ENCODE measurements at regions of chr1 and their contacts with region 1.

Region 1: DNA sequence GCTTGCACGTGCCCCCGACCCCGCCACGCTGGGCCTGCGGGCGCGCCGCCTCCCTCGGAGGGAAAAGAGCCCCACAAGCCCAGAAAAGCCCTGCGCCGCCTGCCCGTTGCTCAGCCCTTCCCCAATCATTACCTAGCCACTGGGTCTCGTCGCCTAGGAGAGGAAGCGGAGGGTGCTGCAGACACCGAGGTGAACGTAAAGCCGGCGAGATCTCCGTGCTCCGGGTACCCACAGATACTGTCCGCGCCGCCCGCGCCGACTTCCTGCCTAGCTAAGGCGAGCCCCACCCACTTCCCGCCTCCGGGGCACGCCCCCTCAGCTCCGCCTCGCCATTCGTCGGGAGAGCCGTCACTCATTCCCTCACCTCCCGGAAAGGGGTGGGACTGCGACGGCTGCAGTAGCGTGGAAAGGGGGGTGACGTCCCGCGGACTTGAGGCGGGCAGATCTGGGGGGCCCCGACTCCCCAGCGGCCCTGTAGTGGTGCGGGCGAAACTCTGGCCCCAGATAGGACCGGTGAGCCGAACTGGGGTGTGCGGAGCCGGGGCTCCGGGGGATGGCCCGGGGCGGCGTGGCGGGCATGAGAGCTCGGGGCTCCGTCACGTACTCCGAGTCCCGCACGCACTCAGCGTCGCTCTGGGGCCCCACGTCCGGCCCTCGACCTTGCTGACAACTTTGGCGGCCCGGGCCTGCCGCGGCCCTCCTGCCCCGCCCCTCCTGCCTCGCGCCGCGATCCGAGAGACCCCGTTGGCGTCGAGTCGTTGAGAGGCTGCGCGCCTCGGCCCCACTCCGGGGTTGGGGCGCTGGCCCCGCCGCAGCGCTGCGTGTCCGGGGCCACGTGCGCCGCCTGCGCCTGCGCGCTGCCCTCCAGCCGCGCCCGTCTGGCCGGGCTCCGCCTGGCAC is at the start of gene ENO1:
- DNase-seq: peak; percentile 96 to 100 (median 99)
- ATAC-seq: peak; percentile 78 to 86
- H3K4me3 Mint-ChIP-seq: peak within 1 kb of the TSS; percentile 89 to 97 (median 94)
- H3K27ac Mint-ChIP-seq: peak within 1 kb of the TSS; percentile 87 to 98 (median 96)
- H3K4me1 Mint-ChIP-seq: peaks cover 12 to 50% (median 46%) of the 10 kb centered on the region in 4 donors
- H3K27me3 Mint-ChIP-seq: no peaks in the 10 kb centered on the region
- polyA plus RNA-seq, gene ENO1: 873 to 1,190 (median 1,047) TPM

Region 2: GRCh38 chr1:8764293-8764937 is 114.3 kb before region 1 on chr1:
- POLR2A ChIA-PET with region 1: no interaction called
- DNase-seq: no peak
- ATAC-seq: no peak
- H3K4me3 Mint-ChIP-seq: no peak overlapping the region
- H3K27ac Mint-ChIP-seq: no peak overlapping the region
- H3K4me1 Mint-ChIP-seq: peaks cover 9 to 26% (median 16%) of the 10 kb centered on the region in 4 donors
- H3K27me3 Mint-ChIP-seq: no peaks in the 10 kb centered on the region

Region 3: DNA sequence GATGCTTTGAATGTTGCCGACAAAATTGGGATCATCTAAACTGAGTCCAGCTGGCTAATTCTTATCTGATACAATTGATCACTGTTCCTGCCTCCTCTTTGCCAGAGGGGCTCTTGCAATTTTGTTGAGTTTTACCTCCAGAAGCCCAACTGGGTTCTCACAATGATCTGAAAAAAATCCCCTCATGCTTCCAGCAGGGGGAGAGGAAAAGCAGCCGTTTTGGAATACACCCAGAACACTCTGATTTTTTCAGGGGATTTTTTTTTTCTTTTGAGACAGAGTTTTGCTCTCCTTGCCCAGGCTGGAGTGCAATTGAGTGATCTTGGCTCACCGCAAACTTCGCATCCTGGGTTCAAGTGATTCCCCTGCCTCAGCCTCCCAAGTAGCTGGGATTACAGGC is 47.4 kb before region 1 on chr1:
- POLR2A ChIA-PET with region 1: no interaction called
- DNase-seq: no peak
- ATAC-seq: no peak
- H3K4me3 Mint-ChIP-seq: peak overlapping the region in 1 of 10 donors; percentile 76
- H3K27ac Mint-ChIP-seq: peak overlapping the region in 1 of 10 donors; percentile 83
- H3K4me1 Mint-ChIP-seq: peaks cover 7 to 17% (median 12%) of the 10 kb centered on the region in 4 donors
- H3K27me3 Mint-ChIP-seq: no peaks in the 10 kb centered on the region

Region 4: GRCh38 chr1:8858888-8859706 is 19.6 kb before region 1 on chr1:
- POLR2A ChIA-PET with region 1: interaction called, 18 read pairs
- DNase-seq: peak; percentile 20 to 74 (median 52)
- ATAC-seq: peak; percentile 85
- H3K4me3 Mint-ChIP-seq: peak overlapping the region in 1 of 10 donors; percentile 11
- H3K27ac Mint-ChIP-seq: peak overlapping the region; percentile 21 to 90 (median 80)
- H3K4me1 Mint-ChIP-seq: peaks cover 6 to 17% (median 15%) of the 10 kb centered on the region in 4 donors
- H3K27me3 Mint-ChIP-seq: no peaks in the 10 kb centered on the region

Region 5: GRCh38 chr1:8925406-8925805 is 46.7 kb after region 1 on chr1:
- POLR2A ChIA-PET with region 1: interaction called, 26 read pairs
- DNase-seq: no peak
- ATAC-seq: no peak
- H3K4me3 Mint-ChIP-seq: no peak overlapping the region
- H3K27ac Mint-ChIP-seq: no peak overlapping the region
- H3K4me1 Mint-ChIP-seq: peaks cover 16 to 44% (median 28%) of the 10 kb centered on the region in 4 donors
- H3K27me3 Mint-ChIP-seq: no peaks in the 10 kb centered on the region

Region 6: GRCh38 chr1:8970870-8971337 is 92.2 kb after region 1 on chr1:
- POLR2A ChIA-PET with region 1: interaction called, 17 read pairs
- DNase-seq: peak in 9 of 10 donors; percentile 18 to 83 (median 64)
- ATAC-seq: peak; percentile 75 to 83
- H3K4me3 Mint-ChIP-seq: peak overlapping the region; percentile 88 to 100 (median 98)
- H3K27ac Mint-ChIP-seq: peak overlapping the region; percentile 94 to 100 (median 97)
- H3K4me1 Mint-ChIP-seq: peaks cover 17 to 53% (median 46%) of the 10 kb centered on the region in 4 donors
- H3K27me3 Mint-ChIP-seq: no peaks in the 10 kb centered on the region

Region 7: GRCh38 chr1:9004700-9005394 is 126.1 kb after region 1 on chr1:
- POLR2A ChIA-PET with region 1: interaction called, 25 read pairs
- DNase-seq: peak; percentile 69 to 89 (median 82)
- ATAC-seq: peak; percentile 84 to 92
- H3K4me3 Mint-ChIP-seq: peak overlapping the region; percentile 67 to 88 (median 80)
- H3K27ac Mint-ChIP-seq: peak overlapping the region in 9 of 10 donors; percentile 59 to 92 (median 86)
- H3K4me1 Mint-ChIP-seq: peaks cover 7 to 27% (median 21%) of the 10 kb centered on the region in 4 donors
- H3K27me3 Mint-ChIP-seq: no peaks in the 10 kb centered on the region

Measured in naive thymus-derived CD8-positive, alpha-beta T cell (primary cell).